GM13977 (cell line): ENCODE measurements at regions of chr3 and their contacts with region 1.

Region 1: GRCh38 chr3:185983495-185984141 is 45.8 kb upstream of the TRA2B start:
- DNase-seq: peak; percentile 70
- CTCF ChIP-seq: peak; percentile 85

Region 2: GRCh38 chr3:185929192-185930151 is 54.1 kb before region 1 on chr3:
- in situ Hi-C with region 1: no loop called
- DNase-seq: no peak
- CTCF ChIP-seq: no peak

Region 3: GRCh38 chr3:186108941-186109865 is 125.6 kb after region 1 on chr3 and contains the start of gene ETV5:
- in situ Hi-C with region 1: no loop called
- DNase-seq: peak; percentile 99
- CTCF ChIP-seq: no peak

Region 4: DNA sequence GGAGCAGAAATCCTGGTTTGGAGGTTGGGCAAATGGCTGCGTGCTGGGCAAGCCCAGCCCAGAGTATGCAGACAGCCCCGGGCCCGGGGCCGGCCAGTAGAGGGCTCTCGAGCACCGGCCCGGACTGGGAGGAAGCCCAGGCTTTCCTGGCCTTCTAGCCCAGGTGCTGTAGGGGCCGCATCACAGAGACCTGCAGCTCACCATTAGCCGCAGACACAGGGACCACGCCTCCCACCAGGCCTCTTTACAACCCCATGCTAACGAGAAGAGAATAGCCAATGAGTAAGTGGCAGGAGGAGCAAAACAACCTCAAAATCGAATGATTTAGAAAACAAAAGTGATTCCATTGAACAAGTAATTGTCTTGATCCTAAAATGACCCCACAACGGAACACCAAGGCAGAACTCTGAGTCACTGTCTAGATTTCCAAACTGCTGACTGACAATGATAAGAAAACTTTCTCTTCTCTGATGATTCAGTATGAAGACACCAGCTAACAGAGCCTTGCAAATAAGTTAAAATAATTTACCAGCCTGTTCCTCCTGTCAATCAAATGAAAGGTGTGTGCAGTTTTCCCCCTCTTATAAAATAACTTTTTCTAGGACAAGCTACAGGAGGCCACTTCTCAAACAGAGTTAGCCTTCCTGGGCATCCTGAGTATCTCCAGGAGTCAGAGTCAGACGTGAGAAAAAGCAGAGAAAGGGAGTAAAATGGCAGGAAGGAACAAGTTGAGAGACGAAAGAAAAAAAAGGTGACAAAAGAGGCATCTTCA is 276.2 kb after region 1 on chr3:
- in situ Hi-C with region 1: loop called (anchors 10 kb)
- DNase-seq: peak; percentile 79
- CTCF ChIP-seq: peak; percentile 98

Region 5: DNA sequence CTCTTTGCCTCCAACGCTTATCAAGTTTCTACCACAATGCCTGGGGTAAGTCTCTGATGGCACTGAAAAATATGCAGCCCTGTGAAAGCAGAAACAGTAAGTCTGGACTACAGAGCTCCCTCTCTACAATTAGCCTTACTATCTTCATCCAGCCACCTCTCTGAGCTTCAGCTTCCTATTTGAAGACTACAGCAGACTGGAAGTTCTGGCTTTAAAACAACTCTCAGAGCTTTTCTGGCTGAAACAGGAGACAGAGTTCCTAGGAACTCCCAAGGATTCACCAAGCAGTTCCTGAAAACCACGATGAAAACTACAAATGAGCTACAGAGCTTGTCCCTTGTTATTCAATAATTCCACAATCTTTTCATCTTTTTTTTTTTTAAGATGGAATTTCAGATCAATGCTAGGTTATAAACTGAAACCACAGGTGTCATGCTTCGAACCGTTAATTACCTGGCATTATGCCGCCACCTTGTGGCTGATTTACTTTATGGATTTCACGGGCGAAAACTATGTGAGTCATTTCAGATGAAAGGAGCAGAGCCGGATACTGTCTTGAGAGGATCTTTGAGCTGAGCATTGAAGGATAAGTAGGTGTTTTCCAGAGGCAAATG is 556.7 kb after region 1 on chr3:
- in situ Hi-C with region 1: loop called (anchors 10 kb)
- DNase-seq: peak; percentile 49
- CTCF ChIP-seq: peak; percentile 71